ENCODE measurements at regions of chr21 and their contacts with region 1.

Region 1: DNA sequence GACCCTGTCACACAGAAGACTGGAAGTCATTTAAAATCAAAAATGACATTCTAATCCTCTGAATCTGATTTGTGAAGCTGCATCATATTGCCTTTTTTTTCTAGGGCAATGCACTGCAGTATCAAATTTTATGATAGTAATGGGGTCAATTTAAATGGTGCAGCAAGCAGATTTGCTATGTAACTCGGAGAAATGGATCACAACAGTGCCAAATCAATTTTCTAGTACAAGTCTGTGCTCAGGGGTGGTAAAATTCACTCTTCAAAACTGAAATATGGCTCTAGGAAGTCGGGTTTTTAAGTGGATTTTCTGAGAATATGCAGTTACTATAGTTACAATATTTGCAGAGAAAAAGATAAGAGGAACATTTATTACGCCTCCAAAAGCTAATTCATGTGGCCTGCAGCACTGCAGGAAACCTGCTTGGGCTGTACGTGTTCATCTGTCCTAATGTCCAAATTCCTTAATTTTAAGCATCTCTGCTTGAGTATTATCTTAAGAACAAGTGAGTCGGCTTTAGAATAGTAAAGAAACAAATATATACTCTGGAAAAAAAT is 31.5 kb downstream of the HLCS start:
- DNase-seq: no peak
- H3K4me3 Mint-ChIP-seq: no peak overlapping the region
- H3K27ac Mint-ChIP-seq: no peak overlapping the region
- H3K4me1 Mint-ChIP-seq: no peaks in the 10 kb centered on the region
- H3K27me3 Mint-ChIP-seq: no peaks in the 10 kb centered on the region

Region 2: GRCh38 chr21:36727866-36728265 is 207.1 kb before region 1 on chr21:
- CTCF ChIA-PET with region 1: no interaction called
- intact Hi-C with region 1: no loop called
- DNase-seq: no peak
- H3K4me3 Mint-ChIP-seq: no peak overlapping the region
- H3K27ac Mint-ChIP-seq: no peak overlapping the region
- H3K4me1 Mint-ChIP-seq: no peaks in the 10 kb centered on the region
- H3K27me3 Mint-ChIP-seq: peaks cover 6% of the 10 kb centered on the region

Region 3: DNA sequence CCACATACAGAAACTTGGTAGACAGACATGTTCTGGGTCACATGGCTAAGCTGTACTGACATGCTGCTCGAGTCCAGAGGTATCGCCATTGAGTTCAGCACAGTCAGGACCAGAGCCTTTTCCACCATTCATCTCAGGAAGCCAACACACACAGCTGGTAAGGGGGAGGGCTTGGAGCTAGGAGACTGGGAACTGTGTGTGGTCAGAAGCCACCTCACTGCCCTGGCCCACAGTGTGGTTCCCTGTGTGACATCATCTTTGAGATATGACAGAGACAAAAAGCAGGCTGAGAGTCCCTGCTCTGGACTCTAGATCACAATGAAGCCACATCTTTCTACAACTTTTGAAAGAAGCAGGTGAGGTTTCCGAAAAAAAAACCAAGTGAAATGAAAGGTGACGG is 128.8 kb before region 1 on chr21:
- CTCF ChIA-PET with region 1: no interaction called
- intact Hi-C with region 1: no loop called
- DNase-seq: no peak
- H3K4me3 Mint-ChIP-seq: no peak overlapping the region
- H3K27ac Mint-ChIP-seq: no peak overlapping the region
- H3K4me1 Mint-ChIP-seq: no peaks in the 10 kb centered on the region
- H3K27me3 Mint-ChIP-seq: no peaks in the 10 kb centered on the region

Region 4: GRCh38 chr21:37009740-37010341 is 74.9 kb after region 1 on chr21:
- CTCF ChIA-PET with region 1: interaction called, 10 read pairs
- intact Hi-C with region 1: loop called (anchors 1 kb)
- DNase-seq: peak; percentile 87
- H3K4me3 Mint-ChIP-seq: no peak overlapping the region
- H3K27ac Mint-ChIP-seq: no peak overlapping the region
- H3K4me1 Mint-ChIP-seq: peaks cover 14% of the 10 kb centered on the region
- H3K27me3 Mint-ChIP-seq: peaks cover 41% of the 10 kb centered on the region